HCT116 (cell line): ENCODE measurements at regions of chr4 and their contacts with region 1.

Region 1: GRCh38 chr4:69322055-69322454 is 41.8 kb downstream of the UGT2B28 start:
- DNase-seq: no peak
- ATAC-seq: no peak
- H3K4me3 ChIP-seq: no peak overlapping the region
- H3K27ac ChIP-seq: no peak overlapping the region
- H3K4me1 ChIP-seq: no peaks in the 10 kb centered on the region
- H3K27me3 ChIP-seq: no peaks in the 10 kb centered on the region
- CTCF ChIP-seq: no peak
- POLR2A ChIP-seq: no peak
- RAD21 ChIP-seq: no peak

Region 2: GRCh38 chr4:69116645-69117321 is 205.3 kb before region 1 on chr4:
- CTCF ChIA-PET with region 1: no interaction called
- POLR2A ChIA-PET with region 1: no interaction called
- RAD21 ChIA-PET with region 1: no interaction called
- intact Hi-C with region 1: no loop called
- DNase-seq: no peak
- ATAC-seq: no peak
- H3K4me3 ChIP-seq: no peak overlapping the region
- H3K27ac ChIP-seq: no peak overlapping the region
- H3K4me1 ChIP-seq: no peaks in the 10 kb centered on the region
- H3K27me3 ChIP-seq: no peaks in the 10 kb centered on the region
- CTCF ChIP-seq: no peak
- POLR2A ChIP-seq: no peak
- RAD21 ChIP-seq: no peak

Region 3: GRCh38 chr4:69617083-69617694 is 295.1 kb after region 1 on chr4:
- CTCF ChIA-PET with region 1: no interaction called
- POLR2A ChIA-PET with region 1: no interaction called
- RAD21 ChIA-PET with region 1: interaction called in 1 of 2 experiments, 3 read pairs
- intact Hi-C with region 1: loop called (anchors 1 kb)
- DNase-seq: peak; percentile 47
- ATAC-seq: no peak; the same call in 1 of the 2 replicates
- H3K4me3 ChIP-seq: no peak overlapping the region
- H3K27ac ChIP-seq: no peak overlapping the region
- H3K4me1 ChIP-seq: no peaks in the 10 kb centered on the region
- H3K27me3 ChIP-seq: no peaks in the 10 kb centered on the region
- CTCF ChIP-seq: peak; percentile 49 to 63 (median 56); a peak in 5 of 6 replicates
- POLR2A ChIP-seq: no peak
- RAD21 ChIP-seq: peak; percentile 79

Region 4: DNA sequence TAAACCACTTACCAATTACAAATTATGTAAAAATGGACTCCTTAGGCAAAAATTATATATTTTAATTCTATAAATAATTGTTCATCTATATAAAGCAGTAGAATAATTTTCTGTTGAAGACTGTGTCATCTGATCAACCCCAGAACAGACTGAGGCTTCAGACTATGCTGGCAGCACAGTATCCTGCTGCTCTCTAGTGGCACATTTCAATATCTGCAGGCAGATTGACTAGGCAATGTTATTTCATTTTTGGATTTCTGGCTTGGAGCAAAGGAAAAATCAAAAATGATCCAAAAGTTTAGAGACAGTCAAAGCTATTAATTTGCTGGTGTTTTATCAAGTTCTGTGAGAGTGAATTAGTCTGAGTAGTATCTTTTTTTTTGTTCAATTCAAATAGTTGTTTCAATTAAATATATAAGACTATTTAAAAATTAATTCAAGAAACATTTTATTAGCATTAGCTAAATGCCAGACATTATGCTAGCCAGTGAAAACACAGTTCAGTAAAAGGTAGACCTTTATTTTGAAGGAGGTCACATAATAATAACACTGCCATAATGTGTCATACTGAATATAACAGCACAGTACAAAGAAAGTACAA is 559.2 kb after region 1 on chr4:
- CTCF ChIA-PET with region 1: no interaction called
- POLR2A ChIA-PET with region 1: no interaction called
- RAD21 ChIA-PET with region 1: no interaction called
- intact Hi-C with region 1: loop called (anchors 1 kb)
- DNase-seq: peak; percentile 22
- ATAC-seq: peak; percentile 78
- H3K4me3 ChIP-seq: no peak overlapping the region
- H3K27ac ChIP-seq: no peak overlapping the region
- H3K4me1 ChIP-seq: no peaks in the 10 kb centered on the region
- H3K27me3 ChIP-seq: no peaks in the 10 kb centered on the region
- CTCF ChIP-seq: peak; percentile 67 to 72 (median 70); a peak in 5 of 6 replicates
- POLR2A ChIP-seq: no peak
- RAD21 ChIP-seq: peak; percentile 86